Activated naive CD4-positive, alpha-beta T cell treated with anti-CD3 and anti-CD28 coated beads for 36 hours (primary cell): ENCODE measurements at regions of chrX and their contacts with region 1.

Region 1: DNA sequence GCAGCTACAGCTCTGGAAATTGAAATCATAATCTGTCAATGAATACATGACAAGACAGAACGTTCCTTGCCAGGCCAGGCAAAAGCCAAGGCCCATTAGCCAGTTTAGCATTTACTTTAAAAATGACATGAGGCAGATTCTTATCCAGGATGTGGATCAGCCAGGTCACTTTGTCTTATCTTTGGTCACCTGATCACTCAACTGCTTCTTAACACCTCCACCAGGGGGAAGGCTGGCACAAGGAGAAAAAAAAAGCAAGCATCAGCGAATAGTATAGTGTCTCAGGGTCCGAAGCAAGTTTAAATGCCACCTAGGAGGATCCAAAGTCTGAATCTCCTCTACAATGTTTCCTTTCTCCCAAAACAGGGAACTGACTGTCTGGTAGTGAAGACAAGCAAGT is 18.8 kb downstream of the ATP1B4 start:
- DNase-seq: peak; percentile 44
- H3K4me3 Mint-ChIP-seq: no peak overlapping the region
- H3K27ac Mint-ChIP-seq: no peak overlapping the region
- H3K4me1 Mint-ChIP-seq: peaks cover 9% of the 10 kb centered on the region
- H3K27me3 Mint-ChIP-seq: no peaks in the 10 kb centered on the region

Region 2: DNA sequence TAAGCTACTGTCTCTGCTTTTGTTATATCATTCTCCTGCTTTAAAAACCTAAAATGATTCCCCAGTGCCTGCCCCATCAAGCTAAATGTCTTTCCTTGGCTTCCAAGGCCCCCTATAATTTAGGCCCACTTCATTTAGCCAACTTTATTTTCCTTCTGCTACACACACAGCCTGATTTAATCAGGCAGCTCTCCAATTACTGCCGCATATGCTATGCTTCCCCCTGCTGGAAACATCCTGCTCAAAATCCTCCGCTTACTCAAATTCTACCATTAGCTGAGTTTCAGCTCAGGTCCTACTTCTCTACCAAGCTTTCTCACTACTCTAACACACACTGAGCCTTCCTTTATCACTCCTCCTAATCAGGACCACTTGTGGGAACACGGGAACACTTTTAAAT is 71.4 kb after region 1 on chrX:
- CTCF ChIA-PET with region 1: interaction called, 13 read pairs
- intact Hi-C with region 1: loop called (anchors 1 kb)
- DNase-seq: peak; percentile 22
- H3K4me3 Mint-ChIP-seq: no peak overlapping the region
- H3K27ac Mint-ChIP-seq: no peak overlapping the region
- H3K4me1 Mint-ChIP-seq: peaks cover 20% of the 10 kb centered on the region
- H3K27me3 Mint-ChIP-seq: no peaks in the 10 kb centered on the region

Region 3: GRCh38 chrX:120477453-120477852 is 96.8 kb after region 1 on chrX:
- CTCF ChIA-PET with region 1: interaction called, 4 read pairs
- intact Hi-C with region 1: loop called (anchors 2 kb)
- DNase-seq: no peak
- H3K4me3 Mint-ChIP-seq: no peak overlapping the region
- H3K27ac Mint-ChIP-seq: no peak overlapping the region
- H3K4me1 Mint-ChIP-seq: no peaks in the 10 kb centered on the region
- H3K27me3 Mint-ChIP-seq: no peaks in the 10 kb centered on the region

Region 4: DNA sequence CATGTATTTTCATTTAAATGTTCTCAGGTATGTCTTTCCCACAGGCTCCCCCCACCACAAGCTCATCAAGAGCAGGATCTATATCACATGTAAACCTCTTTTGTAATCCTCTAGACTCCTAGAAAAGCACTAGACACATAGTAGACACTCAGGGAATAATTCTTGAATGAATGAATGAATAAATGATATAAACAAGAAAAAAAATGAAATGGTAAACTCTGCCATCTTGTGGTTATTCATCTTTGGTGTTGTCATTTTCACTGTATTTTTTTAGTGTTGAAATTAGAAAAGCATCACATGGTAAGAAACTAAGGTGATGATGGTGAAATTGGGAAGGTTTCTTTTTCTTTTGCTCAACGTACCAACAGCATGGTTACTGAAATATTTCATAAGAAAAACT is 283.4 kb after region 1 on chrX:
- CTCF ChIA-PET with region 1: no interaction called
- intact Hi-C with region 1: loop called (anchors 10 kb)
- DNase-seq: no peak
- H3K4me3 Mint-ChIP-seq: no peak overlapping the region
- H3K27ac Mint-ChIP-seq: peak overlapping the region; percentile 36
- H3K4me1 Mint-ChIP-seq: peaks cover 4% of the 10 kb centered on the region
- H3K27me3 Mint-ChIP-seq: no peaks in the 10 kb centered on the region